Heart right ventricle (tissue), 16 donors: ENCODE measurements at regions of chr6 and their contacts with region 1.

Region 1: DNA sequence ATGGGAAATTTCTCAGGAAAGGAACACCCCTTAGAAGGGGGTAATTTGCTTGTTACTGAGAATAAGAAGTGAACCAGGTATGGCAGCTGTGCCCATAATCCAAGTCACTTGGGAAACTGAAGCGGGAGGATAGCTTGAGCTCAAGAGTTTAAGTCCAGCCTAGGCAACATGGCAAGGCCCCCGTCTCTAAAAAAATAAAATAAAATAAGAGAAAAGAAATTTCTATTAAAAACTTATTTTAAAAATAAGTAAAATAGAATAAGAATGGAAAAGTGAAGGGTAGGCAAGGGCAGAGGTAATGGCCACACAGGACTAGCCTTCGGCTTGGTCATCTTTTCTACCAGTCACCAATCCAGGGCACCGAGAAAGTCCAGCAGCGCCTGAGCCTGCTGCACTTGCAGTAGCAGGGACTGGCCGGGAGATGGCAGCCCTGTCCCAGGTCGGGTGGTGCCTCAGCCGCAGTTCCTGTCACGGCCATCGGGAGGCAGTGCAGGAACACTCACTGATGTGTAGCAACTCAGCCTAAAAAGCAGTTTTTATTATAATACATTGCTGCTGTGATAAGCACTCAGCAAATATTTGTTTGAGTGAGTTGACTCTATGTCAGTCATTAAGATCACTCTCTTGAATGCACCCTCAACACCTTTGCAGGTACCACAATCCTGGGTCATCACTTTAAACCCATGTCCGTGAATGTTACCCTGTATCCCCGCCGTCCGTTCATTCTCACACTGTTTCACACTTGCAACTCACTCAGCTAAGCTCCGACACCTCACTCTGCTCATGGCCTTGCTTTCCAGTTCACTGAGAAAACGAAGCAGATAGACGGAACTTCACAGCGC is 23.2 kb upstream of the GCM1 start:
- DNase-seq: peak; percentile 88 to 90
- ATAC-seq: peak; percentile 89 to 97 (median 94)
- H3K4me3 ChIP-seq: no peak overlapping the region
- H3K27ac ChIP-seq: no peak overlapping the region
- H3K4me1 ChIP-seq: peaks cover 0 to 14% (median 3%) of the 10 kb centered on the region in 9 donors
- H3K27me3 ChIP-seq: no peaks in the 10 kb centered on the region
- CTCF ChIP-seq: peak; percentile 100

Region 2: DNA sequence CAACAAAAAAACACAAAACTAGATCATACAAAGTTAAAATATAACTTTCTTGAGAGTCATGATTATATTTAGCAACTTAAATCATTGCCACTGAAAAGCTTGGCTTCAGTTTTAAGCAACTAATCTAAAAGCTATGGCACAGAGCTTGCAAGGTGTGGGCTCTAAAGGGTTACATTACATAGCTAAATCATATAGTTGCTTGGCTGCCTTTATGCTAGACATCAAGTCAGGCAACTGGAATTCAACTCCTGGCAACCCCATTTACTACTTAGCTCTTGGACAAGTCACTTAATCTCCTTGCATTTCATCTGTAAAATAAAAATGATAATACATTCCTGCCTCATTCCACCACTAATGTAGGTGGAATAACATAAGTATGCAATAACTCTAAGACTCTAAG is 17.7 kb after region 1 on chr6:
- intact Hi-C with region 1: no loop called
- DNase-seq: no peak
- ATAC-seq: no peak
- H3K4me3 ChIP-seq: no peak overlapping the region
- H3K27ac ChIP-seq: no peak overlapping the region
- H3K4me1 ChIP-seq: peaks cover 0 to 15% (median 10%) of the 10 kb centered on the region in 9 donors
- H3K27me3 ChIP-seq: no peaks in the 10 kb centered on the region
- CTCF ChIP-seq: no peak

Region 3: DNA sequence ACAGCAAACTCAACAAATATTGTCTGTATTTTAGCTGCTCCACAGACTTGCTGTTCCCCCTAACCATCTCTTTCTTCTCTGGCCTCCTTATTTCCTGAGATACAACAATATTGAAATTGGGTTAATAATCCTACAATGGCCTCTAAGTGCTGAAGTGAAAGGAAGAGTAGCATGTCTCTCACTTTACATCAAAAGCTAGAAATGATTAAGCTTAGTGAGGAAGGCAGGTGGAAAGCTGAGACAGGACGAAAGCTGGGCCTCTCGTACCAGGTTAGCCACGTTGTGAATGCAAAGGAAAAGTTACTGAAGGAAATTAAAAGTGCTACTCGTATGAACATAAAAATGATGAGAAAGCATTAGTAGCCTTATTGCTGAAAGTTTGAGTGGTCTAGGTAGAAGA is 113.1 kb after region 1 on chr6:
- intact Hi-C with region 1: loop called in 3 of 10 experiments (anchors 5 to 10 kb)
- DNase-seq: no peak
- ATAC-seq: no peak
- H3K4me3 ChIP-seq: no peak overlapping the region
- H3K27ac ChIP-seq: no peak overlapping the region
- H3K4me1 ChIP-seq: peaks cover 3 to 56% (median 35%) of the 10 kb centered on the region in 9 donors
- H3K27me3 ChIP-seq: no peaks in the 10 kb centered on the region
- CTCF ChIP-seq: no peak

Region 4: GRCh38 chr6:53348371-53349208 is 176.8 kb after region 1 on chr6 and contains the start of gene ELOVL5:
- intact Hi-C with region 1: loop called in 4 of 10 experiments (anchors 5 to 10 kb)
- DNase-seq: peak; percentile 97 to 99
- ATAC-seq: peak; percentile 93 to 97 (median 94)
- H3K4me3 ChIP-seq: peak within 1 kb of the TSS; percentile 82 to 98 (median 93)
- H3K27ac ChIP-seq: peak within 1 kb of the TSS; percentile 90 to 100 (median 99)
- H3K4me1 ChIP-seq: peaks cover 0 to 40% (median 25%) of the 10 kb centered on the region in 9 donors
- H3K27me3 ChIP-seq: no peaks in the 10 kb centered on the region
- CTCF ChIP-seq: peak in 1 of 9 donors; percentile 14
- total RNA-seq, gene ELOVL5: 16.9 to 48.1 (median 29.7) TPM

Region 5: GRCh38 chr6:53410508-53411258 is 238.9 kb after region 1 on chr6:
- intact Hi-C with region 1: loop called in 9 of 10 experiments (anchors 2 to 5 kb)
- DNase-seq: peak; percentile 34 to 36
- ATAC-seq: peak; percentile 67 to 92 (median 86)
- H3K4me3 ChIP-seq: no peak overlapping the region
- H3K27ac ChIP-seq: no peak overlapping the region
- H3K4me1 ChIP-seq: peaks cover 0 to 18% (median 0%) of the 10 kb centered on the region in 9 donors
- H3K27me3 ChIP-seq: no peaks in the 10 kb centered on the region
- CTCF ChIP-seq: peak; percentile 35 to 84 (median 75)

Region 6: DNA sequence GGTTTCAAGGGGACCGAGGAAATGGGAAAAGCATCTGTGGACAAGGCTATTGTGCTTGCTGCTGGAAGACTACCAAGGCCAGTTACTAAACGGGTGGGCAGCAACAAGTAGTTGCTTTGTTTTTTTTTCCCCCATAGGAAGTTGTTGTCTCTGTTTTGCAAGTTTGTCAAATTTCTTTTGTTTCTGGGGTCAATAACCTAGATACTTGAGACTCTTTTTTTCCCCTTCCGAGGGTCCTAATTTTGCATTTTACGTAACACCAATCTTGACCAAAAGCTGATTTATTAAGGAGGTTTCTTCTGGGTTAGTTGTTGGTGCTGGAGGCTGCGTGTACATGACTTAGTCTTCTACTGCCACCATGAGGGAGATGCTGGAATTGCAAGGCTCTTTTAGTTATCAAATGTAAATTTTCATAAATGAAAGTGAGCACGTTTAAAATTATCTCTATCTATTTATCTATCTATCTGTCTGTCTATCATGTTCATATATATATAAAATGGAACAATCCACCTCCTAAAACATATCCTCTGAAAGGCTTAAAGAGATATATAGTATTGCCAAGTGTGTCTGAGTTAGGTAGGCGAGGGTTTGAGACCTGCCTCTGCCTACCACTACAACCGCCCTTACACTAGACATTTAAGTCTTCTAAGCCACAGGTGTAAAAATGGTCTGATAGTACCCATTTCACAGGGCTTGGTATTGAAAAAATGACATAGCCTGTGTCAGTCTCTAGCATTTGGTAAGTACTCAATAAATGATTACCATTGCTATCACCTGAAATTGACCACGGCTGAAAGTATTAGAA is 312.9 kb after region 1 on chr6:
- intact Hi-C with region 1: loop called (anchors 1 to 5 kb)
- DNase-seq: peak in 1 of 2 donors; percentile 82
- ATAC-seq: peak; percentile 58 to 93 (median 84)
- H3K4me3 ChIP-seq: peak overlapping the region in 6 of 10 donors; percentile 4 to 31 (median 14)
- H3K27ac ChIP-seq: peak overlapping the region; percentile 6 to 88 (median 71)
- H3K4me1 ChIP-seq: peaks cover 2 to 38% (median 22%) of the 10 kb centered on the region in 9 donors
- H3K27me3 ChIP-seq: peaks cover 0 to 18% (median 0%) of the 10 kb centered on the region in 7 donors
- CTCF ChIP-seq: peak; percentile 84 to 99 (median 97)

Region 7: DNA sequence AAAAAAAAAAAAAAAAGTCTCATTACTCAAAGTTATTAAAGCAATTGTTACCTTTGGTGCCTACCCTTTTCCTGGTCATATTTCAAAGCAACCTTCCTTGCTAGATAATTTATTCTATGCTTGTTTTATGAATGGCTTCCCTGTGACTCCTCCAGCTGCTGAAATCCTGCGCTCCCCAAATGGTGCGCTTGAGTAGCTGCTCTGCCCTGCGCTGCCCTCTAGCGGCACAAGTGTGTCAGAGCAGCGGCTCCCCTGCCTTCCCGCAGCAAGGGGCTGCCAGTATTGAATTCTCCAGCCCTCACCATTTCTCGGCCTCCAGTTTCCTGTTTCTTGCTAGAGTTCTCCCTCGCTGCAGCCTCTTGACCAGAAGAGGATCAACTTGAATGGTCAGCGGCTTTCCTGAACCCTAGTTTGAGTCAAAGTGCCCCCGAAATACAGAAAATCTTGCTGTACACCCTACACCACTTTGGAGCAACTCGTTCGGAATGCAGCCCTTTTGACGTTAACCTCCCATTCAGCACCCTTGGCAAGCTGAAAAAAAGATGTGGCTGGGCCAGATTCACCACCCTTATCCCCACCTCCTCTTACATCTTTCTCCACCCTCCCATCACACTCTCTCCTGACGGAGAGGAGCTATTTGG is 554.1 kb after region 1 on chr6:
- intact Hi-C with region 1: loop called in 3 of 10 experiments (anchors 10 kb)
- DNase-seq: peak; percentile 76 to 79
- ATAC-seq: peak; percentile 79 to 93 (median 89)
- H3K4me3 ChIP-seq: no peak overlapping the region
- H3K27ac ChIP-seq: no peak overlapping the region
- H3K4me1 ChIP-seq: peaks cover 0 to 10% (median 0%) of the 10 kb centered on the region in 9 donors
- H3K27me3 ChIP-seq: peaks cover 0 to 6% (median 0%) of the 10 kb centered on the region in 7 donors
- CTCF ChIP-seq: peak; percentile 90 to 97 (median 95)